Activated B cell treated with CpG ODN at 0.5 μM for 24 hours (primary cell): ENCODE measurements at regions of chr7 and their contacts with region 1.

Region 1: GRCh38 chr7:35792873-35793489 is 7.9 kb upstream of the SEPTIN7 start:
- DNase-seq: no peak
- ATAC-seq: no peak
- H3K4me3 Mint-ChIP-seq: no peak overlapping the region
- H3K27ac Mint-ChIP-seq: no peak overlapping the region
- H3K4me1 Mint-ChIP-seq: peaks cover 5% of the 10 kb centered on the region
- H3K27me3 Mint-ChIP-seq: no peaks in the 10 kb centered on the region
- CTCF ChIP-seq: no peak

Region 2: DNA sequence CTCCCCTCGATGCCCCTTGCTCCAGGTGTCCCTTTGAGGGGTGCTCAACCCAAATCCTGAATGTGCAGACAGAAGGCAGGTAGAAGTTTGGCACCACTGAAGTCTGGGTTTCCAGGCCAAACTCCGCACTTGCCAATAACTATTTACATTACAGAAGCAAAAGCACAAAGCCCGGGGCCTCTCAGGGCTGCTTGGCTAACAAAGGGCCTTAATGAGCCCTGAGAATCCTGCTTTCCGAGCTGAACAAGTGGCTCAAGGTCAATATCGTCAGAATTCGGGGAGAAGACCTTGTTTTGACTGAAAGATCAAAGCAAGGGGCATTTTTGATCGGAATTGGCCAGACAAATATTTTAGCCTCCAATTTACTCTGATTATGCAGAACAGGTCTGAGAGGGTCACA is 287.9 kb before region 1 on chr7:
- CTCF ChIA-PET with region 1: no interaction called
- POLR2A ChIA-PET with region 1: no interaction called
- intact Hi-C with region 1: no loop called
- DNase-seq: no peak
- ATAC-seq: no peak
- H3K4me3 Mint-ChIP-seq: no peak overlapping the region
- H3K27ac Mint-ChIP-seq: no peak overlapping the region
- H3K4me1 Mint-ChIP-seq: no peaks in the 10 kb centered on the region
- H3K27me3 Mint-ChIP-seq: peaks cover 5% of the 10 kb centered on the region
- CTCF ChIP-seq: no peak

Region 3: DNA sequence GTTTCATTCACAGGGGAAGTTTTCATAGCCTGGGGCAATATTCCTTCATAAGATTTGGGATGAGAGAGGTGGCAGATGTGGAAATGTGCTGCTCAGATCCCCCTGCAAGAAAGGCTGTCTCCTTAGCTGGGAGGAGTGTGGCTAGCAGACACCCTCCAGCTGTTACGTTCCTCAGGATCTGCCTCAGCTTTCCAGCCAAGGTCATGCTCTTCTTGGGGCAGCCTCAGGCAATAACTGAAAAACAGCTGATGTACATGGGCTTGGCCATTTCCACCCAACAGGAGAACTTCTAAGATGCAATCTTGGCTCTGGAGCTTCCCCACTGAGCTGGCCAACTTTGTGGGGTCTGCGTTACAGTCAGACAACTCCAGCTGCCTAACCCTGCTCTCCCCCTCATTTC is 43.4 kb before region 1 on chr7:
- CTCF ChIA-PET with region 1: no interaction called
- POLR2A ChIA-PET with region 1: no interaction called
- intact Hi-C with region 1: loop called (anchors 5 kb)
- DNase-seq: no peak
- ATAC-seq: no peak
- H3K4me3 Mint-ChIP-seq: no peak overlapping the region
- H3K27ac Mint-ChIP-seq: no peak overlapping the region
- H3K4me1 Mint-ChIP-seq: no peaks in the 10 kb centered on the region
- H3K27me3 Mint-ChIP-seq: no peaks in the 10 kb centered on the region
- CTCF ChIP-seq: no peak